ENCODE measurements at regions of chr1 and their contacts with region 1.

Region 1: GRCh38 chr1:41360993-41361753 is at the start of gene FOXO6:
- DNase-seq: peak; percentile 92 to 96
- ATAC-seq: peak; percentile 76 to 91
- H3K4me3 ChIP-seq: peak within 1 kb of the TSS; percentile 55
- H3K27ac ChIP-seq: peak within 1 kb of the TSS; percentile 45 to 81; a peak in 5 of 6 replicates
- H3K4me1 ChIP-seq: peaks cover 18% of the 10 kb centered on the region; the same call in 2 of the 3 replicates
- CTCF ChIP-seq: peak; percentile 35; the same call in 2 of the 3 replicates
- EP300 ChIP-seq: no peak
- POLR2A ChIP-seq: no peak
- RAD21 ChIP-seq: peak in 1 of 2 experiments; percentile 27; a peak in 1 of 5 replicates
- polyA plus RNA-seq, gene FOXO6: 0.05 and 0.10 TPM in 2 replicates

Region 2: GRCh38 chr1:41222496-41222895 is 138.7 kb before region 1 on chr1:
- CTCF ChIA-PET with region 1: no interaction called
- POLR2A ChIA-PET with region 1: no interaction called
- DNase-seq: no peak
- ATAC-seq: no peak
- H3K4me3 ChIP-seq: no peak overlapping the region
- H3K27ac ChIP-seq: no peak overlapping the region
- H3K4me1 ChIP-seq: peaks cover 33% of the 10 kb centered on the region
- CTCF ChIP-seq: no peak
- EP300 ChIP-seq: no peak
- POLR2A ChIP-seq: no peak
- RAD21 ChIP-seq: no peak

Region 3: GRCh38 chr1:41381692-41382477 is 20.7 kb after region 1 on chr1:
- CTCF ChIA-PET with region 1: interaction called, 3 read pairs
- POLR2A ChIA-PET with region 1: interaction called, 15 read pairs
- DNase-seq: peak; percentile 69 to 72
- ATAC-seq: peak; percentile 76 to 91
- H3K4me3 ChIP-seq: peak overlapping the region; percentile 63
- H3K27ac ChIP-seq: peak overlapping the region; percentile 98 to 99
- H3K4me1 ChIP-seq: peaks cover 13% of the 10 kb centered on the region; the same call in 2 of the 3 replicates
- CTCF ChIP-seq: no peak
- EP300 ChIP-seq: no peak
- POLR2A ChIP-seq: no peak
- RAD21 ChIP-seq: no peak